ENCODE measurements at regions of chr10 and their contacts with region 1.

Region 1: GRCh38 chr10:110918643-110919363 is at the start of gene BBIP1:
- DNase-seq: peak in 5 of 9 experiments; percentile 95 to 100 (median 95)
- ATAC-seq: peak; percentile 93
- H3K4me3 ChIP-seq: peak within 1 kb of the TSS; percentile 92 to 100
- H3K4me3 Mint-ChIP-seq: peak within 1 kb of the TSS; percentile 98
- H3K27ac ChIP-seq: peak within 1 kb of the TSS; percentile 99 to 100
- H3K27ac Mint-ChIP-seq: peak within 1 kb of the TSS; percentile 99
- H3K4me1 ChIP-seq: peaks cover 16% of the 10 kb centered on the region
- H3K4me1 Mint-ChIP-seq: peaks cover 51% of the 10 kb centered on the region
- H3K27me3 ChIP-seq: no peaks in the 10 kb centered on the region
- H3K27me3 Mint-ChIP-seq: no peaks in the 10 kb centered on the region
- CTCF ChIP-seq: no peak
- total RNA-seq, gene BBIP1: 9.5 to 11.1 TPM

Region 2: GRCh38 chr10:109922976-109923921 is 995.6 kb before region 1 on chr10 and contains the start of gene XPNPEP1:
- CTCF ChIA-PET with region 1: no interaction called
- POLR2A ChIA-PET with region 1: no interaction called
- intact Hi-C with region 1: loop called in 1 of 2 experiments (anchors 10 kb)
- DNase-seq: peak; percentile 55 to 93 (median 78)
- ATAC-seq: peak; percentile 90
- H3K4me3 ChIP-seq: peak within 1 kb of the TSS; percentile 75 to 80
- H3K4me3 Mint-ChIP-seq: peak within 1 kb of the TSS; percentile 87
- H3K27ac ChIP-seq: peak within 1 kb of the TSS; percentile 76 to 91
- H3K27ac Mint-ChIP-seq: peak within 1 kb of the TSS; percentile 92
- H3K4me1 ChIP-seq: peaks cover 37% of the 10 kb centered on the region
- H3K4me1 Mint-ChIP-seq: peaks cover 52% of the 10 kb centered on the region
- H3K27me3 ChIP-seq: no peaks in the 10 kb centered on the region
- H3K27me3 Mint-ChIP-seq: no peaks in the 10 kb centered on the region
- CTCF ChIP-seq: no peak
- total RNA-seq, gene XPNPEP1: 50.4 to 54.7 TPM

Region 3: GRCh38 chr10:110497438-110498086 is 421.2 kb before region 1 on chr10 and contains the start of gene DUSP5:
- CTCF ChIA-PET with region 1: no interaction called
- POLR2A ChIA-PET with region 1: no interaction called
- intact Hi-C with region 1: loop called in 1 of 2 experiments (anchors 5 kb)
- DNase-seq: peak; percentile 89 to 98 (median 94)
- ATAC-seq: peak; percentile 92
- H3K4me3 ChIP-seq: peak within 1 kb of the TSS; percentile 67 to 91
- H3K4me3 Mint-ChIP-seq: peak within 1 kb of the TSS; percentile 91
- H3K27ac ChIP-seq: peak within 1 kb of the TSS; percentile 50 to 63
- H3K27ac Mint-ChIP-seq: peak within 1 kb of the TSS; percentile 91
- H3K4me1 ChIP-seq: peaks cover 41% of the 10 kb centered on the region
- H3K4me1 Mint-ChIP-seq: peaks cover 50% of the 10 kb centered on the region
- H3K27me3 ChIP-seq: no peaks in the 10 kb centered on the region
- H3K27me3 Mint-ChIP-seq: no peaks in the 10 kb centered on the region
- CTCF ChIP-seq: no peak
- total RNA-seq, gene DUSP5: 69.8 TPM

Region 4: GRCh38 chr10:110803830-110804338 is 114.9 kb before region 1 on chr10:
- CTCF ChIA-PET with region 1: interaction called, 5 read pairs
- POLR2A ChIA-PET with region 1: interaction called, 9 read pairs
- intact Hi-C with region 1: loop called in 1 of 2 experiments (anchors 1 kb)
- DNase-seq: peak in 7 of 9 experiments; percentile 22 to 79 (median 54)
- ATAC-seq: peak; percentile 51
- H3K4me3 ChIP-seq: no peak overlapping the region
- H3K4me3 Mint-ChIP-seq: peak overlapping the region; percentile 59
- H3K27ac ChIP-seq: peak overlapping the region in 1 of 2 experiments; percentile 44
- H3K27ac Mint-ChIP-seq: peak overlapping the region; percentile 89
- H3K4me1 ChIP-seq: peaks cover 32% of the 10 kb centered on the region
- H3K4me1 Mint-ChIP-seq: peaks cover 40% of the 10 kb centered on the region
- H3K27me3 ChIP-seq: no peaks in the 10 kb centered on the region
- H3K27me3 Mint-ChIP-seq: no peaks in the 10 kb centered on the region
- CTCF ChIP-seq: peak; percentile 58

Region 5: DNA sequence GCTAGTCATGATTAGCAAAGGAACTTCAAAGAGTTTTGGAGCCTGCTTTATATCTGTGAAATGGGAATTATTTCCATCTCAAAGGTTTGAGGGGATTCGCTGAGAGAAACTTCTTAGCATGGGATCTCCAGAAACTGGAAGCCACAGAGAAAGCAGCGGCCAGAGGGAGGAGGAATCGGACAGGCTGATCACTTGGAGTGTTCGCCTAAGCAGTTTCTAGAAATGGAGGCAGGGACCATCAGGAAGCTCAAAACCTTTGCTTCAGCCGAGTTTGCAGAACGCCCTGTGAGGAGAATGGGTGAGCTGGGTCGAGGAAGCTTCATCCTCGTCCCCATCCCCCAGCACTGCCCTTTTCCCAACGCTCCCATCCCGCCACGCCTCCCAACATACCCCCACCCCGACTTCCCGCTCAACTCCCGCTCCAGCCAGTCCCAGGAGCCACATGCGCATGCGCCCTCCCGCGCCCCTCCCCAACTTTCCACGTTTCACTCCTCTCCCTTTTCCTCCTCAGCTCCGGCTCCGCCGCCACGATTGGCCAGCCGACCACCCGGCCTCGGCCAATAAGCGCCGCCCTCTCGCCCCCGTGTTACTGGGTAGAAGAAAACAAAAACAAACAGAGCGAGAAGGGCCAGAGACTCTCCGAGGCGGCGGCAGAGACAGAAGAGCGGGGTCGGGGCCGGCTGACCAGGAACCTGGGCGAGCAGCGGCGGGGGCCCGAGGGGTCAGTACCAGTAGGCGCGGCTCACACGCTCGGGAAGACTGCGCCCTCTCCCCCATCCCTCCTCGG is 47.3 kb before region 1 on chr10 and contains the start of gene PDCD4:
- CTCF ChIA-PET with region 1: interaction called, 3 read pairs
- POLR2A ChIA-PET with region 1: interaction called, 10 read pairs
- intact Hi-C with region 1: loop called (anchors 1 to 2 kb)
- DNase-seq: peak; percentile 87 to 96 (median 94)
- ATAC-seq: peak; percentile 58
- H3K4me3 ChIP-seq: peak within 1 kb of the TSS; percentile 55 to 85
- H3K4me3 Mint-ChIP-seq: peak within 1 kb of the TSS; percentile 89
- H3K27ac ChIP-seq: peak within 1 kb of the TSS; percentile 78 to 97
- H3K27ac Mint-ChIP-seq: peak within 1 kb of the TSS; percentile 98
- H3K4me1 ChIP-seq: peaks cover 71% of the 10 kb centered on the region
- H3K4me1 Mint-ChIP-seq: peaks cover 67% of the 10 kb centered on the region
- H3K27me3 ChIP-seq: no peaks in the 10 kb centered on the region
- H3K27me3 Mint-ChIP-seq: no peaks in the 10 kb centered on the region
- CTCF ChIP-seq: no peak
- total RNA-seq, gene PDCD4: 672 to 688 TPM

Region 6: DNA sequence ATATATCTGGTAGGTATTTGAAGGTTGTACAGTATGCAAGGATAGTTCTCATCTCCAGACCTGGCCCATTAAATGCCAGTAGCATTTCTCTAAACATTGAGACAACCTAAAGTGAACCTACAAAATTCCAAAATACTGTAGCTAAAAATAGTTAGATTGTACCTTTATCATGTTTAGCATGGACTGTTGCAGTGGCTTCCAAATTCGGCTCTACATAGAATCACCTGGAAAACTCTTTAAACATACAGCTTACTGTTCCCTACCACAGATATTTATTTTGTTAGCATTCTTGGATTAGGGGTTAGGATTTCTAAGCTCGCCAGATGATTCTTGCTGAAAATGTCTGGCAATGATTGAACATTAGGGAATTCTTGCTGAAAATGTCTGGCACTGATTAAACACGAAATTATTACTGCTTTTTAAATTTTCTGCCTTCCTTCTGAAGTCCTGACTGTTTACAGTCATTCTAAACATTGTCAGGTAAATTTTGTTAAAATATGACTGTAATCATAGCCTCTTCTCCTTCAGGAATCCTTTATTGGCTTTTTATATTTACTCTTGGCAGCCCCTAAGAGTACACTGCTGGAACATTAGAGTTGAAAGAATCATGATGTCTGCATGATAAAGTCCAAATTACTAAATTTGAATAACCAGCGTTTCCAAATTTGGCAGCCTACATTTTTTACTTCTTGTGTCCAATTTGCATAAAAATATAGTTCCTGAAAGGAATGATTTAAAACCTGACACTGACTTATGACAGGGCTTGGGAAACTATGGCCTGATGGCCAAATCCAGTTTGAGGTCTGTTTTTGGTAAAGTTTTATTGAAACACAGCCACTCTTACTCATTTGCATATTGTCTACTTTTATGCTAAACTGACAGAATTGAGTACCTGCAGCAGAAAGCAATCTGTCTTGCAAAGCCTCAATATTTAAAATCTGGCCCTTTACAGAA is 40.9 kb after region 1 on chr10:
- CTCF ChIA-PET with region 1: no interaction called
- POLR2A ChIA-PET with region 1: no interaction called
- intact Hi-C with region 1: loop called in 1 of 2 experiments (anchors 5 kb)
- DNase-seq: no peak
- ATAC-seq: no peak
- H3K4me3 ChIP-seq: no peak overlapping the region
- H3K4me3 Mint-ChIP-seq: no peak overlapping the region
- H3K27ac ChIP-seq: no peak overlapping the region
- H3K27ac Mint-ChIP-seq: no peak overlapping the region
- H3K4me1 ChIP-seq: peaks cover 12% of the 10 kb centered on the region
- H3K4me1 Mint-ChIP-seq: peaks cover 75% of the 10 kb centered on the region
- H3K27me3 ChIP-seq: no peaks in the 10 kb centered on the region
- H3K27me3 Mint-ChIP-seq: no peaks in the 10 kb centered on the region
- CTCF ChIP-seq: no peak

Region 7: GRCh38 chr10:111598436-111599059 is 679.7 kb after region 1 on chr10:
- CTCF ChIA-PET with region 1: no interaction called
- POLR2A ChIA-PET with region 1: no interaction called
- intact Hi-C with region 1: loop called in 1 of 2 experiments (anchors 10 kb)
- DNase-seq: peak in 8 of 9 experiments; percentile 3 to 63 (median 26)
- ATAC-seq: no peak
- H3K4me3 ChIP-seq: no peak overlapping the region
- H3K4me3 Mint-ChIP-seq: no peak overlapping the region
- H3K27ac ChIP-seq: no peak overlapping the region
- H3K27ac Mint-ChIP-seq: no peak overlapping the region
- H3K4me1 ChIP-seq: no peaks in the 10 kb centered on the region
- H3K4me1 Mint-ChIP-seq: no peaks in the 10 kb centered on the region
- H3K27me3 ChIP-seq: no peaks in the 10 kb centered on the region
- H3K27me3 Mint-ChIP-seq: peaks cover 4% of the 10 kb centered on the region
- CTCF ChIP-seq: peak; percentile 66